ENCODE measurements at regions of chr6 and their contacts with region 1.

Region 1: DNA sequence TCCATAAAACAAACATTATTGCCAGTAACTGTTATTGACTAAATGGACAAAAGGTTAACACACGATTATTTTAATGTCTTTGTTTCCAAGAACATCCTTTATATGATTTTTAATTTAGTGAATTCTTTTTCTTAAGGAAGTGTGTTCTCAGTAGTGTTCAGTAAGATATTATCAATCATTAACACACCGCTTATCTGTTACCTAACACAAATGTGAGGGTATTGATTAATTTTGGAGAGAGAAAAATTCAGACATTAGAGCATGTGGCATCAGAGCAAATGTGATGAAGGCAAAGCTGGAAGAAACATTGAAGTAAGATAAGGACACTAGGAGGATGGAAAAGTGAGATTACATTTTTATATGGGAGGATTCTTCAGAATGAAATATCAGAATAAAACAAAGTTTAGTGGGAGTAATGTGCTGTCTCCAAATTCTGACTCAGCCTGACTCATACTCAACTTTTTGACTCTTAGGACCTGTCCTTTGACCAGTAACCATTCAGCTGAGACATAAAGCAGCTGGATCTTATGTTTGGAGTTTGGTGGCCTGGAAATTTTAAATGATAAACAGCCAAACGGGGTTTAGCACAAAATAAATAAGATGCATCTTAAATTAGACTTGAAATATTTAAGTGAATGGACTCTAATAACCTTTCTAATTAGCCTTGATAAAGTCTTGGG is 348.6 kb downstream of the CD109 start:
- DNase-seq: no peak
- H3K4me3 ChIP-seq: no peak overlapping the region
- CTCF ChIP-seq: no peak
- POLR2A ChIP-seq: no peak

Region 2: GRCh38 chr6:75913040-75913439 is 1868.5 kb after region 1 on chr6:
- intact Hi-C with region 1: loop called (anchors 10 kb)
- DNase-seq: no peak
- H3K4me3 ChIP-seq: no peak overlapping the region
- CTCF ChIP-seq: no peak
- POLR2A ChIP-seq: no peak